ENCODE measurements at regions of chr12 and their contacts with region 1.

Region 1: GRCh38 chr12:77001181-77001758 is 64.1 kb downstream of the E2F7 start:
- DNase-seq: no peak
- H3K4me3 ChIP-seq: no peak overlapping the region
- H3K27ac ChIP-seq: no peak overlapping the region
- H3K4me1 ChIP-seq: no peaks in the 10 kb centered on the region
- H3K27me3 ChIP-seq: no peaks in the 10 kb centered on the region
- CTCF ChIP-seq: no peak
- EP300 ChIP-seq: no peak
- POLR2A ChIP-seq: no peak

Region 2: DNA sequence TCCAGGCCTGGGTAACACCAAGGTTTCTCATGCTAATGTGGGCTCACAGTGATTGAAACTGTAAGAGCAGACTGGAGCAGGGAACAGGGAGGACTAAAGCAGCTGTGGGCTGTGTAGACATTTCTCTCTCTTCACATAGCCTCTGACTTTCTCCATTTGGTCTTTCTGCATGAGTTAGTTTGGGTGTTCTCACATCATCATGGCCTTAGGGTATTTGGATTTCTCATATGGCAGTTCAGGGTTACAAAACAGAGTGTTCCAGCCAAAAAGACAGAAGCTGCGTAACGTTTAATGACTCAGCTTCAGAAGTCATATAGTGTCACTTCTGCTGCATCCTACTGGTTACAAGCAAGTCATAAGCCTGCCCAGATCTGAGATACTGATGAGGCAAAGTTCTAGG is 389.7 kb before region 1 on chr12:
- intact Hi-C with region 1: loop called (anchors 10 kb)
- DNase-seq: no peak
- H3K4me3 ChIP-seq: no peak overlapping the region
- H3K27ac ChIP-seq: no peak overlapping the region
- H3K4me1 ChIP-seq: no peaks in the 10 kb centered on the region
- H3K27me3 ChIP-seq: no peaks in the 10 kb centered on the region
- CTCF ChIP-seq: no peak
- EP300 ChIP-seq: no peak
- POLR2A ChIP-seq: no peak